Activated CD4-positive, alpha-beta memory T cell treated with anti-CD3 and anti-CD28 coated beads, Interleukin-2, amount 10 ng/mL, durations not matched to agents 7 days and 5 days (primary cell): ENCODE measurements at regions of chr20 and their contacts with region 1.

Region 1: DNA sequence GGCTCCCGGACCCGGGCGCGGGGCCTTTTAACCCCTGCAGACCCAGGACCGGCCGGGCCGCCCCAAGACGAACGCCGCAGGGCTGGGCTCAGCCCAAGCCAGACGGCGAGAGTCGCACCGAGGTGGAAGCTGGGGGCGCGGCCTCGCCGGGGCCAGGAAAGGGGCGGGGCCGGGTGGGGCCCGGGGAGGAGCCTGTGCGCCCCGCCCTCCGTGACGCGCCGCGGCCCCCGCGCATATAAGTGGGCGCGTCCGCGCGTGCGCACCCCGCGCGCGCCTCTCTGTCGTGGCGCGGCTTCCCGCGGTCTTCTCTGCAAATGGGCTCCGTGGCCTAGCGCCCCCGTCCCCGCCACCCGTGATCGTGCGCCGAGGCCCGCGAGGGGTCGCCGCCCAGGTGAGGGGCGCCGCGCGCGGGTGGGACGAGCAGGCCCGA is at the start of gene PPDPF:
- DNase-seq: peak; percentile 89
- H3K4me3 Mint-ChIP-seq: peak within 1 kb of the TSS; percentile 79
- H3K27ac Mint-ChIP-seq: peak within 1 kb of the TSS; percentile 81
- H3K4me1 Mint-ChIP-seq: peaks cover 10% of the 10 kb centered on the region
- H3K27me3 Mint-ChIP-seq: peaks cover 9% of the 10 kb centered on the region
- total RNA-seq, gene PPDPF: 228 to 232 TPM

Region 2: GRCh38 chr20:63495741-63496595 is 24.6 kb before region 1 on chr20:
- CTCF ChIA-PET with region 1: interaction called, 13 read pairs
- POLR2A ChIA-PET with region 1: interaction called, 20 read pairs
- DNase-seq: peak; percentile 76
- H3K4me3 Mint-ChIP-seq: peak overlapping the region; percentile 43
- H3K27ac Mint-ChIP-seq: no peak overlapping the region
- H3K4me1 Mint-ChIP-seq: peaks cover 2% of the 10 kb centered on the region
- H3K27me3 Mint-ChIP-seq: peaks cover 22% of the 10 kb centered on the region

Region 3: GRCh38 chr20:63553227-63553932 is 32.9 kb after region 1 on chr20:
- CTCF ChIA-PET with region 1: interaction called, 5 read pairs
- POLR2A ChIA-PET with region 1: interaction called, 14 read pairs
- DNase-seq: peak; percentile 90
- H3K4me3 Mint-ChIP-seq: peak overlapping the region; percentile 41
- H3K27ac Mint-ChIP-seq: peak overlapping the region; percentile 77
- H3K4me1 Mint-ChIP-seq: peaks cover 15% of the 10 kb centered on the region
- H3K27me3 Mint-ChIP-seq: peaks cover 23% of the 10 kb centered on the region

Region 4: DNA sequence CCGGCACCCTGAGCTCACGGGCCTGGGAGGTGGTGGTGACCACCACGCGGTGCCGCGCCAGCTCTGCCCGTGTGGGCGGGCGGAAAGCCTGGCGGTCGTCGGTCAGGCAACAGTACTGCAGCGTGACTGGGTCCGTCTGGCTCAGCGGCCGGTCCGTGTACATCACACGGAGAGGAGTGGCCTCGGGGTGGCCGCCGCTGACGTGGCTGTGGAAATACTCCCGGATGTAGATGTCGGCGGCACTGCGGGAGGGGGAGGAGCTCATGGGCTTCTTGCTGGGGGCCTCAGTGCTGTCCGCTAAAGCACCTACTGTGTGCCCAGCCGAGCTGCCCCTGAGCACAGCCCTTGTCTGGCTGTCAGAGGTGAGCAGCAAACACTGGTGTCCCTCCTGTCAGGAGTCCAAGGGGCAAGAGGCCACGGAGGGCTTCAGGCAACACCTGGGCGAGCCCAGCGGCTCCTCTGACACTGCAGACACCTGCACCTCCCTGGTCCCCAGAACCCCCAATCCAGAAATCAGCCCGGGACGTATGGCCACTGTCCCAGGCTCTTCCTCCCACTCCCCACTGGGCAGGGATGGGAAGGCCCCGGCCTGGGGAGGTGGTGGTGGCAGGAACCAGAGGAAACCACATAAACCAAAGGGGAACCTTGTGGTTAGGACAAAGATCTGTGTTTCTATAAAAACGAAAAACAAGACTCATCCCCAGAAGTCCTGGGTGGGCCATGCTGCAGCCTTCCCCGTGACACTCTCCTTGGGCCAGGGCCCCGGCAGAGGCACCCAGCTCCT is 47.1 kb after region 1 on chr20:
- CTCF ChIA-PET with region 1: no interaction called
- POLR2A ChIA-PET with region 1: interaction called, 11 read pairs
- DNase-seq: peak; percentile 76
- H3K4me3 Mint-ChIP-seq: peak overlapping the region; percentile 63
- H3K27ac Mint-ChIP-seq: peak overlapping the region; percentile 73
- H3K4me1 Mint-ChIP-seq: peaks cover 32% of the 10 kb centered on the region
- H3K27me3 Mint-ChIP-seq: no peaks in the 10 kb centered on the region

Region 5: GRCh38 chr20:63627129-63627750 is 106.7 kb after region 1 on chr20:
- CTCF ChIA-PET with region 1: no interaction called
- POLR2A ChIA-PET with region 1: interaction called, 14 read pairs
- DNase-seq: peak; percentile 95
- H3K4me3 Mint-ChIP-seq: peak overlapping the region; percentile 98
- H3K27ac Mint-ChIP-seq: peak overlapping the region; percentile 73
- H3K4me1 Mint-ChIP-seq: peaks cover 33% of the 10 kb centered on the region
- H3K27me3 Mint-ChIP-seq: no peaks in the 10 kb centered on the region

Region 6: DNA sequence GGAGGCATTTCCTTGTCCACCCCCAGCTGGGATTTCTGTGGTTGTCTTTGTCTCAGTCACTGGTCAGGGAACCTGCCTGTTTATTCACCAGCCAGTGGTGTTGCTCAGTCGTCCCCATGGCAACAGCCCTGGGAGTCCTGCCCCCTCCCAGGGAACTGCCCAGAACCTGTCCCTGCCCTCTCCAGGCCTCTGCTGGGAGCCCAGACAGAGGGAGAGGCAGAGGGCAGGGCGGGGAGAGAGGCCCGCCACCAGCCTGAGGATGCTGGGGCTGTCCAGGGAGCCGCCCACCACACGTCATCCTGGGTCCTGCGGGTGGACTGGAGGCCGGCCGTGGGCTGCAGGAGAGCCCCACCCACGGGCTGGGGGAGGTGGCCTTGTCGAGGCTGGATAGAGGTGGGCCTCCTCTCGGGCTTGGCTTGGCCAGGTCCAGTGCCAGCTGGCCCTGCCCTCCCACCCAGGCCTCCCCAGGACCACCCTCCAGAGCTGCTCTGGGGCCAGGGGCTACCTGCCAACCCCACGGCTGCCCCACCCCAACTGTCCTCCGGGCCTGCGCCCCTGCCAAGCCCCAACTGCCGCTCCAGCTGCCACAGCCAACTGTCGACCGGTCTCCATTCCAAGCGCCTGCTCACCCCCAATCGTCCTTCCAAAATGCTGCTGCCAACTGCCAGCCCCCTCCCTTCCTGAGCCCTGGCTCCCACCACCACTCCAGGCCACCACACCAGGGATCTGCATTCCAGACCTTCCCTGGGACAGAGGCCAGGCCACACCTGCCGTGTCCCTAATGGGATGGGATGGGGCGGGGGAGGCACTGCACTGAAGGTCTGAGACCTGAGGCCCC is 314.7 kb after region 1 on chr20:
- CTCF ChIA-PET with region 1: no interaction called
- POLR2A ChIA-PET with region 1: no interaction called
- DNase-seq: no peak
- H3K4me3 Mint-ChIP-seq: no peak overlapping the region
- H3K27ac Mint-ChIP-seq: no peak overlapping the region
- H3K4me1 Mint-ChIP-seq: no peaks in the 10 kb centered on the region
- H3K27me3 Mint-ChIP-seq: peaks cover 18% of the 10 kb centered on the region